ENCODE measurements at regions of chr6 and their contacts with region 1.

Region 1: DNA sequence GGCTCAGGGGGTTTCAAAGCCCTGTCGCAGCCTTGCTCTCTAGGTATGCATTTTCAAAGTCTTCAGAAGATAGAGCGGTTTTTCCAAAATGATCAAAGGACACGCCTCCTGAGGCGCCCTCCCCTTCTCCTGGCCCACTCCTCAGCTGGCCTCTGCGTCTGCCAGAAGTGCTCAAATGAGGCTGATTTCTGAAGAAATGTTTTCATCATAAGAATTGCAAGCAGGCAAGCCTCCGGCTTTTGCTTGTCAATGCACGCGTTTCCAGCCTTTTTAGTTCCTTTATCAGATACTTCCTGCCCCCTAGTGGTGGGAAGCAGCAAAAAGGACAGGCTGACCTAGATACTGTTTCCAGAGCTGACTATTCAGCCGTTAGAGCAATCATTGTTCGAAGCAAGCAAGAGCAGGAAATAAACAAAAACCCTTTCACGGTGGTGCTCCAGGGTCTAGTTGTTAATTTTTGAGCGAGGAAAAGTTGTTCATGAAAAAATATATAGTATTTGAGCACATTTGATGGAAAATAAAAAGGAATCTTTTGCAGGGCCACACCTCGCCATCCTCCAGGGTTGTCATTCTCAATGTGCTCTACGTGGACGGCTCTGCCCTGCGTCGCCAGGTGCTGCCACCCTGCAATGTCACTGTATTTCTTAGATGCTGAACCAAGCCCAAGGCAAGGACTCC is 93.4 kb upstream of the ASF1A start:
- DNase-seq: peak; percentile 77 to 89 (median 80)
- ATAC-seq: peak; percentile 96
- H3K4me3 ChIP-seq: no peak overlapping the region
- H3K27ac ChIP-seq: no peak overlapping the region
- H3K4me1 ChIP-seq: peaks cover 0 to 3% of the 10 kb centered on the region in 2 experiments; a peak in 3 of 5 replicates
- H3K27me3 ChIP-seq: no peaks in the 10 kb centered on the region
- CTCF ChIP-seq: peak; percentile 74 to 92 (median 83)
- EP300 ChIP-seq: no peak
- POLR2A ChIP-seq: no peak
- RAD21 ChIP-seq: peak; percentile 74 to 88

Region 2: GRCh38 chr6:118419448-118420394 is 380.8 kb before region 1 on chr6:
- CTCF ChIA-PET with region 1: no interaction called
- POLR2A ChIA-PET with region 1: no interaction called
- in situ Hi-C with region 1: no loop called
- intact Hi-C with region 1: loop called (anchors 5 kb)
- DNase-seq: peak in 2 of 4 experiments; percentile 0 to 1
- ATAC-seq: no peak
- H3K4me3 ChIP-seq: no peak overlapping the region
- H3K27ac ChIP-seq: no peak overlapping the region
- H3K4me1 ChIP-seq: no peaks in the 10 kb centered on the region
- H3K27me3 ChIP-seq: no peaks in the 10 kb centered on the region
- CTCF ChIP-seq: no peak
- EP300 ChIP-seq: no peak
- POLR2A ChIP-seq: no peak
- RAD21 ChIP-seq: no peak

Region 3: DNA sequence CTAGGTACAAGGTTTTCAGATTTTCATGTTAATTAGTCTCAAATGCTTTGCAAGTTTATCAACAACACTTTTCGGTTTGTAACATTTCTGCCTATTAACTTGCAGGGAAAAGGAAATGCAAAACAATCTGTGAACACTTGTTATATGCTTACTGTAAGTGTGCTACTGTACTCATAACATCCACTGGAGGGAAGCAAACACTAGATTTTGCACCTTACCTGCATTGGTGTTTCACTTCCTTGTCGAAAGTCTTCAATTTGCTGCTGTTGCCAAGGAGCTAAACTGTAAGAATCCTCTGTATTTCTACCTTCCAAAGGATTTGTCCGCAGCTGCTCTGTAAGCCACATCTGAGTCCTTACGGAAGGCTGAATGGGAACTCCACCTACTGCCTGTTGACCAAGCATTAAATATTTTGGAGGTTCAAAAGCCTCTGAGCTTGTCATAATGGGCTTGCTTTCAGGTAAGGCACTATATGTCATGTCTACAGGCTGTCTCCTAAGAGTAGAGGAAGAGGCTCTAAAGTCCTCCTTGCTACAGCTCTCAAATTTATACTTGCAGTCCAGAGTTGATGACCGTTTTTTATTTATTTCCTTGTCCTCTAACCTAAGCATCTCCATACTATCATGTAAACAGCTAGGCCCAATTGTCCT is 235.1 kb before region 1 on chr6:
- CTCF ChIA-PET with region 1: interaction called, 11 read pairs
- POLR2A ChIA-PET with region 1: no interaction called
- in situ Hi-C with region 1: no loop called
- intact Hi-C with region 1: loop called (anchors 2 kb)
- DNase-seq: peak; percentile 16 to 44 (median 18)
- ATAC-seq: peak; percentile 90
- H3K4me3 ChIP-seq: no peak overlapping the region
- H3K27ac ChIP-seq: no peak overlapping the region
- H3K4me1 ChIP-seq: no peaks in the 10 kb centered on the region; a peak in 1 of 5 replicates
- H3K27me3 ChIP-seq: no peaks in the 10 kb centered on the region
- CTCF ChIP-seq: peak in 2 of 3 experiments; percentile 55 to 66; a peak in 4 of 6 replicates
- EP300 ChIP-seq: no peak
- POLR2A ChIP-seq: no peak
- RAD21 ChIP-seq: peak; percentile 47 to 87; a peak in 3 of 4 replicates

Region 4: GRCh38 chr6:118618679-118619377 is 181.7 kb before region 1 on chr6:
- CTCF ChIA-PET with region 1: no interaction called
- POLR2A ChIA-PET with region 1: no interaction called
- in situ Hi-C with region 1: no loop called
- intact Hi-C with region 1: loop called (anchors 5 kb)
- DNase-seq: peak; percentile 32 to 59 (median 39)
- ATAC-seq: peak; percentile 90
- H3K4me3 ChIP-seq: no peak overlapping the region
- H3K27ac ChIP-seq: no peak overlapping the region
- H3K4me1 ChIP-seq: peaks cover 0 to 7% of the 10 kb centered on the region in 2 experiments; a peak in 3 of 5 replicates
- H3K27me3 ChIP-seq: no peaks in the 10 kb centered on the region
- CTCF ChIP-seq: peak; percentile 80 to 92 (median 80)
- EP300 ChIP-seq: no peak
- POLR2A ChIP-seq: no peak
- RAD21 ChIP-seq: peak; percentile 75 to 82

Region 5: DNA sequence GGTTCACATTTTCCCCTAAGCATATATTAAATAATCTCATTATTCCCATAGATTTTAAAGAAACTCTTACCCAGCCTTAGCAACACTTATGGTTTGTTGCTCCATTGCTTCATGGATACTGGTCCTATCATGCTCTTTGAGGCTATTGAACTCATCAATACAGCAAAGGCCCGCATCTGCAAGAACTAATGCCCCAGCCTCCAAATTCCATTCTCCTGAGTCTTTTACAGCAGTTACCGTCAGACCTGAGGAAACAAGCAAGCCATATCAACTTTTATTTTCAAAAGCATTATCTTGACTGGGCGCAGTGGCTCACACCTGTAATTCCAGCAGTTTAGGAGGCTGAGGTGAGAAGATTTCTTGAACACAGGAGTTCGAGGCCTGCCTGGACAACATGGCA is 55.8 kb after region 1 on chr6:
- CTCF ChIA-PET with region 1: no interaction called
- POLR2A ChIA-PET with region 1: no interaction called
- in situ Hi-C with region 1: no loop called
- intact Hi-C with region 1: no loop called
- DNase-seq: no peak
- ATAC-seq: no peak
- H3K4me3 ChIP-seq: no peak overlapping the region
- H3K27ac ChIP-seq: no peak overlapping the region
- H3K4me1 ChIP-seq: no peaks in the 10 kb centered on the region
- H3K27me3 ChIP-seq: no peaks in the 10 kb centered on the region
- CTCF ChIP-seq: no peak
- EP300 ChIP-seq: no peak
- POLR2A ChIP-seq: no peak
- RAD21 ChIP-seq: no peak

Region 6: DNA sequence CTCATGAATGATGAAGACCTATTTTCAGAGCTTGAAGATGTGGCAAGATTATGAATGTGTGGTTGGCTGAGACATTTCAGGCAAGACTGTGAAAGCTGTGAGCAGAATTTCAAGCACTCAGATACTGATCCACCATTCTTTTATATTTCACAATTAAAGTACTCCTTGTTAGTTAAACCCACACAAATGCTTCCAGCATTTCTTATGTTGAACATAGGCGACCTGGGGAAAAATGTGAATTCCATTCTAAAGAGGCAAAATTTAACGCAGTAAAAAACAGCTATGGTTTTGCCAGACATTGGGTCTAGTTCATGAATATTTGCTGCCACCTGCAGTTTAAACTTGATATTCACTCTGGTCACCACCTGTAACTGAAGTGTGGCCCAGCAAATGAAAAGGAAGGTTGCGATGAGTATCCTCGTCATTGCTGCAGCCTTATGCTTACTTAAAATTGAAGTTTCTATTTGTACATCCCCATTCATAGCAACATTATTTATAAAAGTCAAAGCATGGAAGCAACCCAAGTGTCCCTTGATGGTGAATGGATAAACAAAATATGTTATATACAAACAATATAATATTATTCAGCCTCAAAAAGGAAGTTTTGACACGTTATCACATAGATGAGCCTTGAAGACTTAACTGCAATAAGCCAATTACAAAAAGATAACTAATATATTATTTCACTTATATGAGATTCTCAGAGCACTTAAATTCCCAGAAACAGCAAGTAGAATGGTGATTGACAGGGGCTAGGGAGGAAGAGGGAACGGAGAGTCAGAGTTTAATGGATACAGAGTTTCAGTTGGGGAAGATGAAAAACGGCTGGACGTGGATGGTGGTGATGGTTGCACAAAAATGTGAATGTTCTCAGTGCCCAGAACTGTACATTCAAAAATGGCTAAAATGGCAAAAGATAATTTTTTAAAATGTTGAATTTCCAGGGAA is 310.3 kb after region 1 on chr6:
- CTCF ChIA-PET with region 1: no interaction called
- POLR2A ChIA-PET with region 1: interaction called, 3 read pairs
- in situ Hi-C with region 1: loop called (anchors 10 kb)
- intact Hi-C with region 1: loop called (anchors 5 kb)
- DNase-seq: peak; percentile 58 to 79 (median 64)
- ATAC-seq: peak; percentile 92
- H3K4me3 ChIP-seq: no peak overlapping the region
- H3K27ac ChIP-seq: no peak overlapping the region
- H3K4me1 ChIP-seq: peaks cover 3 to 16% of the 10 kb centered on the region in 2 experiments; a peak in 3 of 5 replicates
- H3K27me3 ChIP-seq: no peaks in the 10 kb centered on the region
- CTCF ChIP-seq: peak; percentile 68 to 86 (median 72)
- EP300 ChIP-seq: no peak
- POLR2A ChIP-seq: no peak
- RAD21 ChIP-seq: peak; percentile 97 to 98

Measured in K562 (cell line).